ENCODE measurements at regions of chr5 and their contacts with region 1.

Region 1: GRCh38 chr5:138583984-138584637 is 8.9 kb upstream of the HSPA9 start:
- DNase-seq: no peak
- H3K4me3 ChIP-seq: no peak overlapping the region
- H3K27ac ChIP-seq: no peak overlapping the region
- H3K4me1 ChIP-seq: 0 out of 2 replicates have a peak, but pooled peaks cover 3% of the 10 kb centered on the region
- H3K27me3 ChIP-seq: no peaks in the 10 kb centered on the region
- CTCF ChIP-seq: no peak

Region 2: DNA sequence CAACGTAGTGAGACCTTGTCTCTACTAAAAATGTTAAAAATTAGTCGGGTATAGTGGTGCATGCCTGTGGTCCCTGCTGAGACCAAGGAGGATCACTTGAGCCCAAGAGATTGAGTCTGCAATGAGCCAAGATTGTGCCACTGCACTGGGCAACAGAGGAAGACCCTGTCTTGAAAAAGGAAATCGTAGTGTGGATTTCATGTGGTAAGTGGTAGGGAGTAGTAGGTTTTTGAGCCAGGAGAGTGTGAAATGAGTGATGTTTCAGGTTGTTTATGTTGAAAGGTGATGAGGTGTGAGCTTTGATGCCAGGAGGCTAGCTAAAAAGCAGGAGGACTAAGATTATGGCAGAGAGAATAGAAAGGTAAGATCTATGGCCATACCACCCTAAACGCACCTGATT is 715.4 kb after region 1 on chr5:
- CTCF ChIA-PET with region 1: no interaction called
- POLR2A ChIA-PET with region 1: interaction called, 16 read pairs
- intact Hi-C with region 1: no loop called
- DNase-seq: no peak
- H3K4me3 ChIP-seq: no peak overlapping the region
- H3K27ac ChIP-seq: no peak overlapping the region
- H3K4me1 ChIP-seq: peaks cover 33% of the 10 kb centered on the region
- H3K27me3 ChIP-seq: no peaks in the 10 kb centered on the region
- CTCF ChIP-seq: no peak